Posterior cingulate gyrus (tissue), 11 donors: ENCODE measurements at regions of chr12 and their contacts with region 1.

Region 1: GRCh38 chr12:108731105-108731865 is at the start of gene CORO1C:
- DNase-seq: peak; percentile 87 to 99 (median 92)

Region 2: DNA sequence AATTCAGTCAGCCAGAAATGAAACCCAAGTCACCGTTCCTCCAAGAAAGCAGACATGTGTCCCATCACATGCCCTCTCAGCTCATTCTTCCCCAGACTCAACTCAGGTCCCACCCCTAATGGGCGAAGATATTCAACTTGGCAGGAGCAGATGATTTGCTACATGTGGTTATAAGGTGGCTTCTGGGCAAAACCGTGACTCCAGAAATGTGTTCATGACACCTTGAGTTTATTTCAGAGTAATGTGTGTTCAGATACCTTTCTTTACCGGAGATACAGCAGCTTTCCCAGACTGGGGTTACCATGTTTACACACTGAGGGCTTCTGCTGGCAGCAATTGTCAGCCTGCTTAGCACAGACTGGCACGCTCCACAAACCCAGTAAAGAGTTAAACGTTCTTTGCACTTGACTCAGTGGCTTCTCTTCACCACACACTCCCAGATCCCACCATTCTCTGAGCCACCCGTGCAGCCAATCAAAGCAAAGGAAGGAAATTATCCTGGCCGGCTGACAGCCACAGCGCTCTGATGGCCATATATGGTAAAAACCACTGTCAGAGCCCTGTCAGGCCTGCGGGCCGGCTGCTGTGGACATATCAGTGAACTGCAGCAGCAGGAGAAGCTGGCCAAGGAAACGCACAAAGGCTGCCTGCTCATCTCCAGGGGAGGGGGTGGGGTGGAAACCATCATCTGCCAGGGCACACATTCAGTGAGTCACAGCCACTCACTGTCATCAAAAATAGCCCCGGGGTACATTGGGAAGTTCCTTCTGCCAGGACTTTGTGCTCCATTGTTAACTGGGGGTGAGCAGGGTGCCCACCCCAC is 39.9 kb before region 1 on chr12:
- intact Hi-C with region 1: loop called (anchors 1 kb)
- DNase-seq: peak; percentile 88 to 99 (median 90)